ENCODE measurements at regions of chr11 and their contacts with region 1.

Region 1: GRCh38 chr11:727859-728748 is 19.2 kb upstream of the TALDO1 start:
- DNase-seq: peak; percentile 60
- H3K4me3 ChIP-seq: no peak overlapping the region
- H3K27ac ChIP-seq: no peak overlapping the region
- H3K4me1 ChIP-seq: no peaks in the 10 kb centered on the region
- H3K27me3 ChIP-seq: peaks cover 8 to 9% of the 10 kb centered on the region in 2 experiments
- CTCF ChIP-seq: peak; percentile 96 to 100
- POLR2A ChIP-seq: no peak

Region 2: DNA sequence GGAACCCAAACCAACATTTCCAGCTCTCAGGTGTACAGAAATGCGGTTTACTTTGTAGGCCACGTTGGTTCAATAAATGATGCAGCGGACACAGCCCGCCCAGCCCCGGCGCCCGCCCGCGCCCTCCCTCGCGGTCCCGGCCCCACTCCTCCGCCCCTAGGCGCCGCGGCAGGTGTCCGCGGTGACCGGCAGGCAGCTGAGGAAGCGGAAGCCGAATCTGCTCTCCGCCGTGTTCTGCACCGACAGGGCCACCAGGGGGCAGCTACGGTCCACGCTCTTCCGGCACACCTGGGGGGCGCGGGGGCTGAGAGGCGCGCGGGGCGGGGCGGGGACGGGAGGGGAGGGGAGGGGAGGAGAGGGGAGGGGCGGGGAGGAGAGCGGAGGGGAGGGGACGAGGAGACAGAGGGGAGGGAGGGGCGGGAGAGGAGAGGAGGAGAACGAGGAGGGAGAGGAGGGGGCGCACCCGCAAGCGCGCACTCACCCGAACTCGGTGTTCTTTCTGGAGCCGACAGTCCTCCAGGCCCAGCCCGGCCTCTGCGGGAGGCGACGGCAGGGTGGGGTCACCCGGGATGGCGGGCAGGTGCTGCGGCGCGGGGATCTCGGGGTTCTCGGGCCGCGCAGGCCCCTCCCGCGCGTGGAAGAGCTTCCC is 173.2 kb before region 1 on chr11:
- CTCF ChIA-PET with region 1: interaction called, 26 read pairs
- POLR2A ChIA-PET with region 1: no interaction called
- dilution Hi-C with region 1: no loop called
- intact Hi-C with region 1: loop called (anchors 5 kb)
- DNase-seq: no peak
- H3K4me3 ChIP-seq: no peak overlapping the region
- H3K27ac ChIP-seq: no peak overlapping the region
- H3K4me1 ChIP-seq: peaks cover 3% of the 10 kb centered on the region
- H3K27me3 ChIP-seq: peaks cover 13 to 21% of the 10 kb centered on the region in 2 experiments
- CTCF ChIP-seq: peak in 1 of 2 donors; percentile 54
- POLR2A ChIP-seq: no peak

Region 3: DNA sequence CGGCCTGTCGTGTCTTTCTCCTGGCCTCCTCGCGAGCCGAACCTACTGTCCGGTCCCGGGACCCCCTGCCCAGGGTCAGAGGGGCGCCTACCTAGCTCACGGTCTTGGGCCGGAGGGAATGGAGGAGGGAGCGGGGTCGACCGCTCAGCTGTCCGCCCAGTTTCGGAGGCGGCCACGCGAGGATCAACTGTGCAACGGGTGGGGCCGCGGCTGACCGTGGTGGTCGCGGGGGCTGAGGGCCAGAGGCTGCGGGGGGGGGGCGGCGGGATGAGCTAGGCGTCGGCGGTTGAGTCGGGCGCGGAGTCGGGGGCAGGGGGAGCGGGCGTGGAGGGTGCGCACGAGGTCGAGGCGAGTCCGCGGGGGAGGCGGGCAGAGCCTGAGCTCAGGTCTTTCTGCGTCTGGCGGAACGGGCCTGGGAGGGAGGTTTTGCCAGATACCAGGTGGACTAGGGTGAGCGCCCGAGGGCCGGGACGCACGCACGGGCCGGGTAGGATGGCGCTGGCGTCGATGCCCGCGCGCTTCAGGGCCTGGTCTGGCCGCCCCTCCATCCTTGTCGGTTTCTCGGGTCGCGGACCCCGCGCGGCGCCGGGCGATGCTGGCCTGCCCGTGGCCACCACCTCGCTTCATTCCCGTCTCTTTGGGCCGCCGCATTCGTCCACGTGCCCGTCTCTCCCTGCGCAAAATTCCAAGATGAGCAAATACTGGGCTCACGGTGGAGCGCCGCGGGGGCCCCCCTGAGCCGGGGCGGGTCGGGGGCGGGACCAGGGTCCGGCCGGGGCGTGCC is 91.5 kb before region 1 on chr11:
- CTCF ChIA-PET with region 1: no interaction called
- POLR2A ChIA-PET with region 1: no interaction called
- dilution Hi-C with region 1: no loop called
- intact Hi-C with region 1: no loop called
- DNase-seq: no peak
- H3K4me3 ChIP-seq: no peak overlapping the region
- H3K27ac ChIP-seq: no peak overlapping the region
- H3K4me1 ChIP-seq: peaks cover 4% of the 10 kb centered on the region
- H3K27me3 ChIP-seq: peaks cover 27 to 45% of the 10 kb centered on the region in 2 experiments
- CTCF ChIP-seq: no peak
- POLR2A ChIP-seq: no peak

Region 4: DNA sequence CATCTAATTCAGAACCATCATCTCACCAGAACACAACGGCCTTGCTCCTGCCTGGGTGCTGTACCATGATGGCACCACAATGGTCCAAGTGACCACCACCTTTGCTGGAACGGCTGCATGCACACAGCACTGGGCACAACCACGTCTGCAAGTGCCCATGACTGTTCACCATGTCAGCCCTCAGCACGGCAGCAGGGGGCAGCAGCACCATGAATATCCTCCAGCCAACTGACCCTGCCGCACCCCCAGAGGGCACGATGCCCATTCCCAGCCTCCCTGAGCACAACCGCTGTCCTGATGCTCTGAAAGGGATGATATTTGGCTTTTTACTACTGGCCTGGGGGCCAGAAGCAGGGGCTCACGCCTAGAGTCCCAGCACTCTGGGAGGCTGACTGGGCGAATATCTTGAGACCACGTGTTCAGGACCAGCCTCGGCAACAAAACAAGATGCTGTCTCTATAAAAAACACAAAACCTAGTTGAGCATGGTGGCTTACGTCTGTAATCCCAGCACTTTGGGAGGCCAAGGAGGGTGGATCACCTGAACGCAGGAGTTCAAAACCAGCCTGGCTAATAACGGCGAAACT is 65.3 kb before region 1 on chr11:
- CTCF ChIA-PET with region 1: interaction called, 10 read pairs
- POLR2A ChIA-PET with region 1: no interaction called
- dilution Hi-C with region 1: no loop called
- intact Hi-C with region 1: loop called (anchors 1 kb)
- DNase-seq: peak; percentile 54
- H3K4me3 ChIP-seq: no peak overlapping the region
- H3K27ac ChIP-seq: no peak overlapping the region
- H3K4me1 ChIP-seq: no peaks in the 10 kb centered on the region
- H3K27me3 ChIP-seq: no peaks in the 10 kb centered on the region
- CTCF ChIP-seq: peak; percentile 76 to 86
- POLR2A ChIP-seq: no peak

Region 5: GRCh38 chr11:695538-696248 is 32.4 kb before region 1 on chr11 and contains the start of gene TMEM80:
- CTCF ChIA-PET with region 1: interaction called, 36 read pairs
- POLR2A ChIA-PET with region 1: no interaction called
- dilution Hi-C with region 1: no loop called
- intact Hi-C with region 1: loop called (anchors 1 kb)
- DNase-seq: peak; percentile 97
- H3K4me3 ChIP-seq: peak within 1 kb of the TSS; percentile 82 to 93 (median 84)
- H3K27ac ChIP-seq: peak within 1 kb of the TSS; percentile 94
- H3K4me1 ChIP-seq: peaks cover 23% of the 10 kb centered on the region
- H3K27me3 ChIP-seq: no peaks in the 10 kb centered on the region
- CTCF ChIP-seq: no peak
- POLR2A ChIP-seq: peak; percentile 91
- total RNA-seq, gene TMEM80: 24.1 and 26.6 TPM in 2 replicates

Region 6: GRCh38 chr11:702788-703538 is 25.1 kb before region 1 on chr11:
- CTCF ChIA-PET with region 1: interaction called, 36 read pairs
- POLR2A ChIA-PET with region 1: interaction called, 3 read pairs
- dilution Hi-C with region 1: no loop called
- intact Hi-C with region 1: no loop called
- DNase-seq: no peak
- H3K4me3 ChIP-seq: no peak overlapping the region
- H3K27ac ChIP-seq: no peak overlapping the region
- H3K4me1 ChIP-seq: peaks cover 5% of the 10 kb centered on the region
- H3K27me3 ChIP-seq: no peaks in the 10 kb centered on the region
- CTCF ChIP-seq: no peak
- POLR2A ChIP-seq: no peak

Region 7: DNA sequence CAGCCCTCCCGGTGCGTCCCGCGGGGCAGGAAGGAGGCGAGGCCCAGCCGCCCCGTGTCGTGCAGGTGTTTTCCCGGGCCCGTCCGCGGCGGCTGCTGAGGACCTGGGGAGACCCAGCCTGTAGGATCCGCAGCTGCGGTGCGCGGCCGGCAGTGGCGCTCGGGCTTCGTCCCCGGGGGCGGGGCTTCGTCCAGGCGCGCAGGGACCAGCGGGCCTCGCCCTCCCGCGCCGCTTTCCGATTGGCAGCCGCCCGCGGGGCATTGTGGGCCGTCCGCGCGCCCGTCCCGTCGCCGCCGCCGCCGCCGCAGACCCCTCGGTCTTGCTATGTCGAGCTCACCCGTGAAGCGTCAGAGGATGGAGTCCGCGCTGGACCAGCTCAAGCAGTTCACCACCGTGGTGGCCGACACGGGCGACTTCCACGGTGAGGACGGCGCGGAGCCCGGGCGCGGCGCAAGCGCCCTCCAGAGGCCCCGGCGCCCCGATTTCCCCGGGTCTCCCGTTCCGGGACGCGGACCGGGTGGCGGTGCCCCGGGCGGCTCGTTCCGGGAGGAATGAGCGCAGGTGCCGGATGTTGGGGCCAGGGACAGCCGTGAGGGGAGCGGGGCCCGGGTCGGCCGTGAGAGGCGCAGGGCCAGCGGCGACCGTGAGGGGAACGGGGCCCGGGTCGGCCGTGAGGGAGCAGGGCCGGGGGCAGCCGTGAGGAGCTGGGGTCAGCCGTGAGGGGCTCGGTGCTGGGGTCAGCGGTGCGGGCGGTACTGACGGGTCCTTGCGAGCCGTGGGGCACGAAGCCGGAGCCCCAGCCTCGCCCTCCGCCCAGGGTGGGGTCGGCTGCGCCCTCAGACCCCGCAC is 19.3 kb after region 1 on chr11 and contains the start of gene TALDO1:
- CTCF ChIA-PET with region 1: interaction called, 26 read pairs
- POLR2A ChIA-PET with region 1: no interaction called
- dilution Hi-C with region 1: no loop called
- intact Hi-C with region 1: no loop called
- DNase-seq: peak; percentile 88
- H3K4me3 ChIP-seq: peak within 1 kb of the TSS; percentile 41 to 79 (median 71)
- H3K27ac ChIP-seq: peak within 1 kb of the TSS; percentile 48
- H3K4me1 ChIP-seq: peaks cover 17% of the 10 kb centered on the region
- H3K27me3 ChIP-seq: no peaks in the 10 kb centered on the region
- CTCF ChIP-seq: peak in 1 of 2 donors; percentile 7
- POLR2A ChIP-seq: peak; percentile 72
- total RNA-seq, gene TALDO1: 287 and 294 TPM in 2 replicates

Region 8: GRCh38 chr11:783581-784015 is 55.5 kb after region 1 on chr11:
- CTCF ChIA-PET with region 1: no interaction called
- POLR2A ChIA-PET with region 1: no interaction called
- dilution Hi-C with region 1: no loop called
- intact Hi-C with region 1: no loop called
- DNase-seq: peak; percentile 80
- H3K4me3 ChIP-seq: no peak overlapping the region
- H3K27ac ChIP-seq: no peak overlapping the region
- H3K4me1 ChIP-seq: no peaks in the 10 kb centered on the region
- H3K27me3 ChIP-seq: no peaks in the 10 kb centered on the region
- CTCF ChIP-seq: peak; percentile 82 to 93
- POLR2A ChIP-seq: no peak

Measured in endothelial cell of umbilical vein (primary cell).